Transverse colon (tissue), 4 donors: ENCODE measurements at regions of chr3 and their contacts with region 1.

Region 1: DNA sequence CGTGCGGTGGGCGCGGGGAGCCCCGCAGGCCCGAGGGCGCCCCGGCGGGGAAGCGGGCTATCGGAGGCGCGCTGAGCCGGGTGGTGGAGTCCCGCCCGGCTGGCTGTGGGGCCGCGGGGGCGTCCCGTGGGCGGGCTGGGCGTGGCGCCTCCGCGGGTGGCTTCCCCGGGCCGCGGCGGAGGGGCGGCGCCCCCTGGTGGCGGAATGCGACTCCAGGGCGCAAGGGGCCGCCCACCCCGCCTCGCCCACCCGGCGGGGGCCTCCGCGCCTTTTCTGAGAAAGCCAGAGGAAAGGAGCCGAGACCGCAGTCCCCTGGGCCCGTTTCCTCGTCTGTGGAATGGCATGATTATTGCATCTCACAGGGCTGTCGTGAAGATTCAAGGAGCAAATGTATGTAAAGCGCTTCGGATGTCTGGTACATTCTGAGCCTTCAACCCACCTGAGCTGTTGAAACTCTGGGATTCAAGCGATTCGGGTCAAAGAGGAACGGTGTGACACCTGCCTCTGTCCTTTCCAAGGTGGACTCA is 31.9 kb upstream of the RAB6B start:
- DNase-seq: peak; percentile 63
- H3K4me3 ChIP-seq: peak overlapping the region; percentile 18 to 46 (median 41)
- H3K27ac ChIP-seq: no peak overlapping the region
- H3K4me1 ChIP-seq: peaks cover 4 to 7% (median 6%) of the 10 kb centered on the region in 4 donors
- H3K27me3 ChIP-seq: no peaks in the 10 kb centered on the region
- CTCF ChIP-seq: peak; percentile 28 to 80 (median 66)
- EP300 ChIP-seq: no peak
- POLR2A ChIP-seq: no peak

Region 2: DNA sequence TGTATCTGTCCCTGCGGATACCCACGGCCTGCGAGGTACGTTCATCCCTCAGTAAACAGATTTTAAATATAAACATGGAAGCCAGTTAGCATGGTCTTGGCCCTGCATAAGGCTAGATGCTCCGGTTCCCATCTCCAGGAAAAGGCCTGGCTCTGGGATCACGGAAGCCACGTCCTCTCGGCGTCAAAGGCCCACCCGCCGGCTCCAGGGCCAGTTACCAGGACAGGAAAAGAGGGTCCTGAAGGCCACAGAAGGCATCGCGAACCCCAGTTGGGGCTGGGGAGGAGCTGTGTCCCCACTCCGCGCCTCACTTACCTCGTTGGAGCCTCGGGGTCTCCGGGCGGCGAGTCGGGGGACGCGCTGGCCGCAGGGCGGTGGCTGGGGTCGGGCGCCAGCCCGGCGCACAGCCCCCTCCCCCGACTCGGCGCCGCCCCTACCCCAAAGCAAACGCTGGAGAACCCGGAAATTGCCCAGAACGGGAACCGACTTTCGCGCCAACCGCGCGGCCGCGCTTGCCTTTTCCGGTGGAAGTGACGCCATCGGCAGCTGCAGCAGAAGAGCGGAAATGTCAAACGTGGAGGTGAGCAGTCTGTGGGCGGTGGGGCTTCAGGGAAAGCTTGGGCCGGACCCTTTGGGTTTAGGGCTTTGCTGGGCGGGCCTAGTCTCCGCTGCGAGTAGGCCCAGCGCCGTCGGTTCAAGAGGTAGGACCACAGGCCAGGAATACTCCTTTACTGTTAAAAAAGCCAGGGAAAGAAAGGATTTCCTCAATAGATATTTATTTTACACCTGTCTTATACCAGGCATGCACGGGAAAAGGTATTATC is 265.9 kb before region 1 on chr3 and contains the start of gene TOPBP1:
- in situ Hi-C with region 1: loop called in 1 of 4 experiments (anchors 10 kb)
- intact Hi-C with region 1: no loop called
- DNase-seq: peak; percentile 88
- H3K4me3 ChIP-seq: peak within 1 kb of the TSS; percentile 59 to 88 (median 80)
- H3K27ac ChIP-seq: peak within 1 kb of the TSS; percentile 79 to 88 (median 86)
- H3K4me1 ChIP-seq: peaks cover 0 to 24% (median 10%) of the 10 kb centered on the region in 4 donors
- H3K27me3 ChIP-seq: no peaks in the 10 kb centered on the region
- CTCF ChIP-seq: no peak
- EP300 ChIP-seq: no peak
- POLR2A ChIP-seq: peak; percentile 65
- total RNA-seq, gene TOPBP1: 13.5 to 64.7 (median 32.2) TPM

Region 3: GRCh38 chr3:133821767-133822638 is 105.6 kb before region 1 on chr3:
- in situ Hi-C with region 1: loop called in 2 of 4 experiments (anchors 10 kb)
- intact Hi-C with region 1: loop called (anchors 5 kb)
- DNase-seq: peak; percentile 58
- H3K4me3 ChIP-seq: no peak overlapping the region
- H3K27ac ChIP-seq: no peak overlapping the region
- H3K4me1 ChIP-seq: no peaks in the 10 kb centered on the region
- H3K27me3 ChIP-seq: no peaks in the 10 kb centered on the region
- CTCF ChIP-seq: peak in 1 of 5 experiments; percentile 11
- EP300 ChIP-seq: no peak
- POLR2A ChIP-seq: no peak

Region 4: DNA sequence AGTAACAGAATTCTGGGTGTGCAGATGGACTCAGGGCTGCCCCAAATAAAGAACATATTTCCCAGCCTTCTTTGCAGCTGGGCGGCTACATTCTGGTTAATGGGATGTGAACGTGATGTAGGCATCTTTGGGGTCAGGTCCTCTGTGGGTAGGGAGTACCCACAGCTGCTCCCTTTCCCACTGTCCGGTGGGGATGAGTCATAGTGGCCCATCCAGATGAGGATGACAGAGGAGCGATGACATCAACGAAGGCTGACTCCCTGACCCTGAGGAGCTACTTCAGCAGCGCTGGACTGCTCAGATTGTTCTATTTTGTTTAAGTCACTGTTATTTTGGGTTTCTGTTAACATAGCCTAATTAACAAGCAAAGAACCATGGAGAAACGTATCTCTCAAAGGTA is 84.0 kb before region 1 on chr3:
- in situ Hi-C with region 1: no loop called
- intact Hi-C with region 1: no loop called
- DNase-seq: no peak
- H3K4me3 ChIP-seq: no peak overlapping the region
- H3K27ac ChIP-seq: no peak overlapping the region
- H3K4me1 ChIP-seq: no peaks in the 10 kb centered on the region
- H3K27me3 ChIP-seq: no peaks in the 10 kb centered on the region
- CTCF ChIP-seq: no peak
- EP300 ChIP-seq: no peak
- POLR2A ChIP-seq: no peak